GM12878 (cell line): ENCODE measurements at regions of chr3 and their contacts with region 1.

Region 1: GRCh38 chr3:143081844-143082778 is 37.5 kb upstream of the CHST2 start:
- DNase-seq: peak; percentile 94
- ATAC-seq: peak; percentile 81
- H3K4me3 ChIP-seq: peak overlapping the region; percentile 51; the same call in 1 of the 2 replicates
- H3K27ac ChIP-seq: peak overlapping the region; percentile 92
- H3K4me1 ChIP-seq: peaks cover 35% of the 10 kb centered on the region
- H3K27me3 ChIP-seq: no peaks in the 10 kb centered on the region
- CTCF ChIP-seq: no peak
- EP300 ChIP-seq: peak; percentile 91 to 93
- POLR2A ChIP-seq: peak; percentile 23
- RAD21 ChIP-seq: no peak

Region 2: DNA sequence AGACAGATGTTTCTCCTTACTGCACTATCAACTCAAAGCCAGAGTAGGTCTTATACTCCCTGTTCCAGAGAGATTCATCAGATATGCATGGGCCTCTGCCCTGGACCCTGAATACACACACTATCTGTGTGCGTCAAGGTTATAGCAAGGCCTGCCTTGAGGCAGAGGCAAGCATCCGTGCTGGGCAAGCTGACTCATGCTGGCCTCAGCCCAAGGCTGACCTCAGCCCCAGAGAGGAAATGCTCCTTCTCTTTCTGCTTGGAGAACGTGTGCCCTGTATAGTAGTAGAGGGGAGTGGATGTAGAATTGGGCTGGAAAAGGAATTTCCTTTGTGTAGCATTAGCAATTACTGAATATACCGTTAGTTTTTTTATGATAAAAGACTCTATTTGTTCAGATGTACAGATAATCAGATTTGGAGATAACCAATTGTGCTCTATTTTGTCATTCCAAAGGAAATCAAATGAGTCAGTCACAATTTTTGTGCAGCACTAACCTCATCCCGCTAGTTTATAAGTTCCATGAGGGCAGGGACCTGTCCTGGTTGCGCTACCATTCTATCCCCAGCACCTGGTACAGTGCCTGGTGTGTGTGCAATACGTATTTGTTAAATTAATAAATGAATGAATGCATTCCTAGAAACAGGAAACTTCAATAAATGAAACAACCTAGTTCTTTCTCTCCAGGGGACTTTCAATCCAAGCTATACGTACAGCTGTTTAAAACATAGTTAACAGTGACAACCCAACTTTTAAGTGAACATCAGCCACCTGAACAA is 105.3 kb before region 1 on chr3:
- CTCF ChIA-PET with region 1: no interaction called
- POLR2A ChIA-PET with region 1: no interaction called
- RAD21 ChIA-PET with region 1: no interaction called
- SMC1A ChIA-PET with region 1: no interaction called
- in situ Hi-C with region 1: no loop called
- intact Hi-C with region 1: no loop called
- DNase-seq: no peak
- ATAC-seq: no peak; the same call in 1 of the 3 replicates
- H3K4me3 ChIP-seq: no peak overlapping the region
- H3K27ac ChIP-seq: no peak overlapping the region
- H3K4me1 ChIP-seq: no peaks in the 10 kb centered on the region
- H3K27me3 ChIP-seq: peaks cover 0 to 2% of the 10 kb centered on the region in 2 experiments; a peak in 2 of 4 replicates
- CTCF ChIP-seq: no peak
- EP300 ChIP-seq: no peak
- POLR2A ChIP-seq: no peak
- RAD21 ChIP-seq: no peak

Region 3: DNA sequence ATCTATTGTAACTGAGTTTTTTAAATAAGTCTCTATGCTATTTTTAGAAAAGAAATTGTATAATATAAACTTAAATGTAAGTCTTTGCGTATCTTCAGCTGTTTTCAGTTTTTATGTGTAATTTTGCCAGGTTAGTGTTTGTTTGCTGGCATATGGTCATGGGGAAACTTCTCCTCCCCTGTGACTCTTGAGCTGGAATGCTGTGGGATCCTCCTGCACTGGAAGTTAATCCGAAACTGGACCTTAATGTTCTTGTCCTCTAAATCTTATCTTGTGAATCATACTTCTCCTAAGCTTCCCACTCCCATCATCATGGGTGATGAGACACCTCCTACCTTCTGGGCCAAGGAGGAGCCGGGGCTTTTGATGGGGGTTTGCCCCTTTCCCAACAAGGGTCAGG is 14.9 kb before region 1 on chr3:
- CTCF ChIA-PET with region 1: interaction called, 3 read pairs
- POLR2A ChIA-PET with region 1: no interaction called
- RAD21 ChIA-PET with region 1: no interaction called
- SMC1A ChIA-PET with region 1: interaction called, 10 read pairs
- in situ Hi-C with region 1: no loop called
- intact Hi-C with region 1: no loop called
- DNase-seq: no peak
- ATAC-seq: no peak
- H3K4me3 ChIP-seq: no peak overlapping the region
- H3K27ac ChIP-seq: no peak overlapping the region
- H3K4me1 ChIP-seq: no peaks in the 10 kb centered on the region
- H3K27me3 ChIP-seq: no peaks in the 10 kb centered on the region
- CTCF ChIP-seq: no peak
- EP300 ChIP-seq: no peak
- POLR2A ChIP-seq: no peak
- RAD21 ChIP-seq: no peak